ENCODE measurements at regions of chr17 and their contacts with region 1.

Region 1: GRCh38 chr17:34199932-34200534 is 55.1 kb upstream of the CCL2 start:
- DNase-seq: no peak
- H3K4me3 ChIP-seq: no peak overlapping the region
- H3K27me3 ChIP-seq: no peaks in the 10 kb centered on the region
- CTCF ChIP-seq: peak; percentile 100

Region 2: GRCh38 chr17:34171245-34171818 is 28.7 kb before region 1 on chr17:
- CTCF ChIA-PET with region 1: interaction called, 15 read pairs
- POLR2A ChIA-PET with region 1: no interaction called
- DNase-seq: no peak
- H3K4me3 ChIP-seq: no peak overlapping the region
- H3K27me3 ChIP-seq: peaks cover 3% of the 10 kb centered on the region; the same call in 1 of the 2 replicates
- CTCF ChIP-seq: peak; percentile 91

Region 3: GRCh38 chr17:34235389-34236028 is 35.5 kb after region 1 on chr17:
- CTCF ChIA-PET with region 1: interaction called, 16 read pairs
- POLR2A ChIA-PET with region 1: no interaction called
- DNase-seq: no peak
- H3K4me3 ChIP-seq: no peak overlapping the region
- H3K27me3 ChIP-seq: no peaks in the 10 kb centered on the region
- CTCF ChIP-seq: no peak

Region 4: DNA sequence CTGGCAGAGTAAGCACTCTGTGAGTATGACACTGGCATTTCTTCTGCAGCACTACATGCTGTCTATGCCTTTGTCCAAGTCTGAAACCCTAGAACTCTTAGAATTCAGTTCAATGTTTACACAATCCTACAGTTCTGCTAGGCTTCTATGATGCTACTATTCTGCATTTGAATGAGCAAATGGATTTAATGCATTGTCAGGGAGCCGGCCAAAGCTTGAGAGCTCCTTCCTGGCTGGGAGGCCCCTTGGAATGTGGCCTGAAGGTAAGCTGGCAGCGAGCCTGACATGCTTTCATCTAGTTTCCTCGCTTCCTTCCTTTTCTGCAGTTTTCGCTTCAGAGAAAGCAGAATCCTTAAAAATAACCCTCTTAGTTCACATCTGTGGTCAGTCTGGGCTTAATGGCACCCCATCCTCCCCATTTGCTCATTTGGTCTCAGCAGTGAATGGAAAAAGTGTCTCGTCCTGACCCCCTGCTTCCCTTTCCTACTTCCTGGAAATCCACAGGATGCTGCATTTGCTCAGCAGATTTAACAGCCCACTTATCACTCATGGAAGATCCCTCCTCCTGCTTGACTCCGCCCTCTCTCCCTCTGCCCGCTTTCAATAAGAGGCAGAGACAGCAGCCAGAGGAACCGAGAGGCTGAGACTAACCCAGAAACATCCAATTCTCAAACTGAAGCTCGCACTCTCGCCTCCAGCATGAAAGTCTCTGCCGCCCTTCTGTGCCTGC is 54.8 kb after region 1 on chr17 and contains the start of gene CCL2:
- CTCF ChIA-PET with region 1: interaction called, 25 read pairs
- POLR2A ChIA-PET with region 1: no interaction called
- DNase-seq: no peak
- H3K4me3 ChIP-seq: peak within 1 kb of the TSS; percentile 53
- H3K27me3 ChIP-seq: no peaks in the 10 kb centered on the region
- CTCF ChIP-seq: no peak
- polyA plus RNA-seq, gene CCL2: 303 and 386 TPM in 2 replicates

Region 5: GRCh38 chr17:34354637-34355036 is 154.6 kb after region 1 on chr17:
- CTCF ChIA-PET with region 1: interaction called, 512 read pairs
- POLR2A ChIA-PET with region 1: interaction called, 3 read pairs
- DNase-seq: peak; percentile 68
- H3K4me3 ChIP-seq: no peak overlapping the region
- H3K27me3 ChIP-seq: no peaks in the 10 kb centered on the region
- CTCF ChIP-seq: no peak

Region 6: DNA sequence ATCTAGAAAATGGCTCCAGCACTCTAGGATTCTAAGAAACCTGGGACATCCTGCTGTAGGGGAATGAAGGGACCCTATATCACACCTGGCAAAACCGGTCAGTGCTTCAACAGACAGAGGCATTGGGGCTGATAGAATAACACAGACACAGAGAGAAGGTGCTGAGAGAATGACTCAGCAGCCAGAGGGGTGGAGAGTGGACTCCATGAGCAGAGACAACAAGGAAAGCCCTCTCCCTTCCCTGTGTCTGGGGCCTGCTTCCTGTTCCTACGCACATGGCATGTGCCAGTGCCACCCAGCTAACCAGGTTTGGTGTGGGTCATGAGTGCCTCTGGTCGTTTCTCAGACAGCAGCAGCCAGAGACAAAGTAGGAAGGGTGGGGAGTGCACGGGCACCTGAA is 620.9 kb after region 1 on chr17:
- CTCF ChIA-PET with region 1: no interaction called
- POLR2A ChIA-PET with region 1: no interaction called
- DNase-seq: no peak
- H3K4me3 ChIP-seq: no peak overlapping the region
- H3K27me3 ChIP-seq: no peaks in the 10 kb centered on the region
- CTCF ChIP-seq: no peak